Common myeloid progenitor, CD34-positive (primary cell): ENCODE measurements at regions of chr22 and their contacts with region 1.

Region 1: DNA sequence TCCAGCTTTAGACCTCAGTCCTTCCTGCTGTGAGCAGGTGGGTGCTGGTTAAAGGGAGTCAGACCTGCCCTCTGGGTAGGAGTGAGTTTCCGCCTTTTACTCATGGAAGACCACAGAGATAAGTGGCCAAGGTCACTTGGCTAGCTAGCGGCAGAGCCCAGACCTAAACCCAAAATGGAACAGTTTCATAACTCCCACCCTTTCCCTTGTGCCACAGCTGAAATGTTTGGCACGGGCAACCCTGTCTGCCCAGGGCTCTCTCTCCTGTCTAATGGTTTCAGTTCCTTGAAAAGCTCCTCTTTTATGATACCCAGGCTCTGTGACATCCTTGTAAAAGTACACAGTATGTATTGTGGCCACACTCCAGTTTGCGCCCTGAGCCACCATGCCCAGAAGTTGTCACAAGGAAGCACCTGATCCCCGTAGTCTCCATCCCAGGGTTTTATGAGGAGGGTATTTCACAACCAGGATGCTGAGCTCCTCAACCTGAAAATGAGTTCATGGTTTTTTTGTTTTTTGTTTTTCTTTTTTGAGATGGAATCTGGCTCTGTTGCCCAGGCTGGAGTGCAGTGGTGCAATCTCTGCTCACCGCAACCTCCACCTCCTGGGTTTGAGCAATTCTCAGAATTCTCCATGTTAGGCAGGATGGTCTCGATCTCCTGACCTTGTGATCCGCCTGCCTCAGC is 5.1 kb downstream of the MB start:
- DNase-seq: peak in 2 of 3 donors; percentile 33 to 47
- H3K4me3 ChIP-seq: peak overlapping the region in 2 of 7 experiments; percentile 7 to 25
- H3K27ac ChIP-seq: no peak overlapping the region
- H3K4me1 ChIP-seq: peaks cover 9 to 42% (median 29%) of the 10 kb centered on the region in 4 experiments
- H3K27me3 ChIP-seq: peaks cover 0 to 2% (median 0%) of the 10 kb centered on the region in 5 experiments

Region 2: DNA sequence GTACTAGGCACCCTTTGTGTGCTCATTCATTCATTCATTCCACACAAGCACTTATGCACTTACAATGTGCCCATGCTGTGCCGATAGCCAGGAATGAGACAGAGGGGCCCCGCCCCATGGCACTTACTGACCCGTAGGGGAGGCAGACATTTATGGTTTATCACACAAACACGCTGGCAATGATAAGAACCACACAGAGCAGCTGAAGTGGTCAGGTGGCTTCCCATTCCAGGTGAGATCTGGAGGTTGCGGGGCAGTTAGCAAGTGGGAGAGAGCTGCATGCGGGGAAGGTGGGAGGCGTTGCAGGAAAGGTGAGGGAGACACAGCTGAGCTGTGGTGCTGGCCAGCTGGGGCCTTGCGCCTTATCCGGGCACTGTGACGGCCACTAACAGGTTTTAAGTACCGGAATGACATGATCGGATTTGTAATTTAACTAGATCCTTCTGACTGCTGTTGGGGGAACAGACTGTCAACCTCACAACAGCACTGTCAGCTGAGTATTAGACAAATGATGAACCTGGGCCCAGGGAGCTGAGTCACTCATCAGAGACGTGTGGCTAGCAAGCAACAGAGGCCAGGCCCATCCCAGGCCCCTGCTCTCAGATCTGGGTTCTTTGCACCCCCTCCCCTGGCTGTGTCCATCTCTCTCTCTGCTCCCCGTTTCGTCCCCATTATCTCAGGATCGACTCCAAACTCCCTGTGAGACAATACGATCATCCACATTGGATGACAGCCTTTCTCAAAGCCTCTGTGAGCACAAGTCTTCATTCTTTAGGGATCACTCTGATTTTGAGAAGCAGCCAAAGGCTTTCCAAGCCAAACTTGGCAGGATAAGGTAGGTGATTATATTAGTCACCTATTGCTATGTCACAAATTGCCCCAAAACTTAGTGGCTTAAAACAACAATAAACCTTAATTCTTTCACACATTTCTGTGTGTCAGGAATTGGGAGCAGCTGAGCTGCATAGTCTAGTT is 43.0 kb before region 1 on chr22:
- CTCF ChIA-PET with region 1: no interaction called
- POLR2A ChIA-PET with region 1: no interaction called
- DNase-seq: no peak
- H3K4me3 ChIP-seq: no peak overlapping the region
- H3K27ac ChIP-seq: no peak overlapping the region
- H3K4me1 ChIP-seq: no peaks in the 10 kb centered on the region
- H3K27me3 ChIP-seq: no peaks in the 10 kb centered on the region

Region 3: DNA sequence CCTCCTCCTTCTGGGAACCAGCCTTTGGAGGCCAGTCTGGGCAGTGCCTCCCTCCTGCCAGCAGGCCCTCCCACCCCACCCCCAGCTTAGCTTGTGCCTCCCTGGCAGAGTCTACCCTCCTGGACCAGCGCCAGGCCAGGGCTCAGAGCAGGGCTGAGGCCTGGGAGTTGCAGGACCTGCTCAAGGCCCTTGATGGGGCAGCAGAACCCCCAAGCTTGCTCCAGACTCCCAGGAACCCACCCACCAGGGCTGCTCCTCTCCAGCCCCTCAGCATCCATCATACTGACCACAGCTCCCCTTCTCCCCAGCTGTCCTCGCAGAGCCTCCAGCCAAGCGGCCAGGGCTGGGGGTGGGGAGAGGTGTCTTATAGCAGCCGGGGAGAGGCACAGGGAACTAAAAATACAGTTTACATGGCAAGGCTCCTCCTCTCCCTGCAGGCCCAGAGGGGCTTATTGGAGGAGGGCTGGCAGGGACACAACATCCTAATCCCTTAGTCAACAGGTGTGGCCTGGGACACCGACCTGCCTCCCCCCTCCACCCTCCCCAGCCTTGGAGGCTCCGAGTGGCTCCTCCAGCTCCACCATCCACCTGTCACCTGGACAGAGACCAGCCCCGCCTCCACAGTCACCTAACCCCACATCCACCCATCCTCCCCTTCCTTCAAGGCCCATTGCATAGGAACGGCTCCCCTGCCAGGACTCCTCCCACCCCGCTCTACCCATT is 10.3 kb after region 1 on chr22:
- CTCF ChIA-PET with region 1: interaction called, 18 read pairs
- POLR2A ChIA-PET with region 1: no interaction called
- DNase-seq: no peak
- H3K4me3 ChIP-seq: no peak overlapping the region
- H3K27ac ChIP-seq: no peak overlapping the region
- H3K4me1 ChIP-seq: peaks cover 0 to 7% (median 4%) of the 10 kb centered on the region in 4 experiments
- H3K27me3 ChIP-seq: peaks cover 0 to 8% (median 3%) of the 10 kb centered on the region in 5 experiments

Region 4: DNA sequence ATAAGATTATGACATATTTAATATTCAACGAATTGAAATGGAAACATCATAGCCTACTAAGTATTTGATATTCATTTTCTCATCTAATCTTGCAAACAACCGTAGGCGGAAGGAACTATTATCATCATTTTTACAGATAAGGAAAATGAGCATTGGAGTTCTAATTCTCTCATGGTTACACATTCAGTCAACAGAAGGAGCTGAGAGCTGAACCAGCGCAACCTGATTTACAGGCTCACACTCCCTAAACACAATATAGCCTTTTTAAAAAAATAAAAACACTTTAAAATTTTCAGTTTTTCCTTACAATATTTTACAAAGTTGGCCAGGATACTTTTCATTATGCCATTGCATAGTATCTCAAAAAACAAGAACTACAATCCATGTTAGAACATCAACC is 180.5 kb after region 1 on chr22:
- CTCF ChIA-PET with region 1: no interaction called
- POLR2A ChIA-PET with region 1: no interaction called
- DNase-seq: no peak
- H3K4me3 ChIP-seq: no peak overlapping the region
- H3K27ac ChIP-seq: no peak overlapping the region
- H3K4me1 ChIP-seq: no peaks in the 10 kb centered on the region
- H3K27me3 ChIP-seq: no peaks in the 10 kb centered on the region